ENCODE measurements at regions of chr2 and their contacts with region 1.

Region 1: DNA sequence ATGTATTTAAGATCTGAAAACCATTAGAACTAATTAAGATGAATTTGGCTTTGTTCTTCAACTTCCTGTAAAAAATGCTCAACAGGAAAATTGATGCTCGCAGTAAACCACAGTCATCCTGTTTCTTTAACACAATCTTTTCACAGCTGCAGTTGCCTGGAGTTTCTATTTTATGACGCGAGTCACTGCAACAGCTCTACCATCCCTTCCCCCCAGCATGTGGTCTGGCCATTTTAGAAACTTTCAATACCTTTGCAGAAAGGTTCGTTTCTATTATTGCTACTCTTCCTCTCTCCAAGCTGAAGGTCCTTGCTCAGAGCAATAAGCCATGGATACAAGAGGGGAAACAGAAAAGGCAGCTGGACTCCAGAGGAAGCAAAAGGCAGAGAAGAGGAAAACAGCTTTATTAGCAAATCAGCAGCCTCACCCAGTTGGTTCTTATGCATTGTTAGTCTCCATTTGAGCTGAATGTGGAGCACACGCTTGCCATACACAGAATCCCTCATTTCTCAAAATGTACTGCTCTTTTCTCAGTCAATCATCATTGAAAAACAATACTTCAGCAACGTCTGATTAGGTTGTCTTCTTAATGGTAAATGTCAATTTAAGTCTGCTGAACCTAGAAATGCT is 3.9 kb downstream of the WIPF1 start:
- DNase-seq: peak; percentile 86 to 90 (median 88)
- H3K4me3 ChIP-seq: peak overlapping the region; percentile 54 to 80
- H3K4me3 Mint-ChIP-seq: peak overlapping the region; percentile 88 to 100 (median 98)
- H3K27ac ChIP-seq: peak overlapping the region; percentile 89
- H3K27ac Mint-ChIP-seq: peak overlapping the region; percentile 92 to 100 (median 98)
- H3K4me1 ChIP-seq: peaks cover 63% of the 10 kb centered on the region
- H3K4me1 Mint-ChIP-seq: peaks cover 40 to 79% (median 53%) of the 10 kb centered on the region in 4 donors
- H3K27me3 ChIP-seq: no peaks in the 10 kb centered on the region
- H3K27me3 Mint-ChIP-seq: peaks cover 0 to 1% of the 10 kb centered on the region in 2 donors

Region 2: GRCh38 chr2:174487108-174487819 is 106.4 kb before region 1 on chr2:
- CTCF ChIA-PET with region 1: interaction called, 6 read pairs
- POLR2A ChIA-PET with region 1: interaction called, 63 read pairs
- intact Hi-C with region 1: loop called (anchors 1 kb)
- DNase-seq: peak; percentile 77 to 94 (median 82)
- H3K4me3 ChIP-seq: peak overlapping the region; percentile 4 to 77
- H3K4me3 Mint-ChIP-seq: peak overlapping the region; percentile 91 to 100 (median 98)
- H3K27ac ChIP-seq: peak overlapping the region; percentile 81
- H3K27ac Mint-ChIP-seq: peak overlapping the region; percentile 91 to 97 (median 94)
- H3K4me1 ChIP-seq: peaks cover 76% of the 10 kb centered on the region
- H3K4me1 Mint-ChIP-seq: peaks cover 48 to 87% (median 64%) of the 10 kb centered on the region in 4 donors
- H3K27me3 ChIP-seq: no peaks in the 10 kb centered on the region
- H3K27me3 Mint-ChIP-seq: no peaks in the 10 kb centered on the region

Region 3: GRCh38 chr2:174553811-174554493 is 39.7 kb before region 1 on chr2:
- CTCF ChIA-PET with region 1: interaction called, 3 read pairs
- POLR2A ChIA-PET with region 1: interaction called, 10 read pairs
- intact Hi-C with region 1: no loop called
- DNase-seq: peak; percentile 33 to 58 (median 49)
- H3K4me3 ChIP-seq: no peak overlapping the region
- H3K4me3 Mint-ChIP-seq: peak overlapping the region; percentile 57 to 85 (median 74)
- H3K27ac ChIP-seq: peak overlapping the region; percentile 67
- H3K27ac Mint-ChIP-seq: peak overlapping the region; percentile 83 to 97 (median 89)
- H3K4me1 ChIP-seq: peaks cover 39% of the 10 kb centered on the region
- H3K4me1 Mint-ChIP-seq: peaks cover 31 to 52% (median 37%) of the 10 kb centered on the region in 4 donors
- H3K27me3 ChIP-seq: no peaks in the 10 kb centered on the region
- H3K27me3 Mint-ChIP-seq: no peaks in the 10 kb centered on the region

Region 4: GRCh38 chr2:174577967-174578589 is 15.6 kb before region 1 on chr2:
- CTCF ChIA-PET with region 1: interaction called, 430 read pairs
- POLR2A ChIA-PET with region 1: interaction called, 256 read pairs
- intact Hi-C with region 1: loop called (anchors 1 kb)
- DNase-seq: peak; percentile 63 to 77 (median 67)
- H3K4me3 ChIP-seq: no peak overlapping the region
- H3K4me3 Mint-ChIP-seq: peak overlapping the region in 1 of 8 donors; percentile 3
- H3K27ac ChIP-seq: no peak overlapping the region
- H3K27ac Mint-ChIP-seq: peak overlapping the region; percentile 66 to 88 (median 80)
- H3K4me1 ChIP-seq: peaks cover 93% of the 10 kb centered on the region
- H3K4me1 Mint-ChIP-seq: peaks cover 49 to 93% (median 68%) of the 10 kb centered on the region in 4 donors
- H3K27me3 ChIP-seq: no peaks in the 10 kb centered on the region
- H3K27me3 Mint-ChIP-seq: no peaks in the 10 kb centered on the region

Region 5: GRCh38 chr2:174623690-174624089 is 30.0 kb after region 1 on chr2:
- CTCF ChIA-PET with region 1: interaction called, 3 read pairs
- POLR2A ChIA-PET with region 1: interaction called, 233 read pairs
- intact Hi-C with region 1: no loop called
- DNase-seq: no peak
- H3K4me3 ChIP-seq: no peak overlapping the region
- H3K4me3 Mint-ChIP-seq: peak overlapping the region in 1 of 8 donors; percentile 44
- H3K27ac ChIP-seq: peak overlapping the region; percentile 28
- H3K27ac Mint-ChIP-seq: peak overlapping the region in 6 of 7 donors; percentile 52 to 85 (median 79)
- H3K4me1 ChIP-seq: peaks cover 68% of the 10 kb centered on the region
- H3K4me1 Mint-ChIP-seq: peaks cover 51 to 80% (median 67%) of the 10 kb centered on the region in 4 donors
- H3K27me3 ChIP-seq: no peaks in the 10 kb centered on the region
- H3K27me3 Mint-ChIP-seq: no peaks in the 10 kb centered on the region

Region 6: GRCh38 chr2:174682578-174683391 is 89.1 kb after region 1 on chr2:
- CTCF ChIA-PET with region 1: interaction called, 222 read pairs
- POLR2A ChIA-PET with region 1: interaction called, 85 read pairs
- intact Hi-C with region 1: loop called (anchors 2 kb)
- DNase-seq: peak; percentile 66 to 79 (median 73)
- H3K4me3 ChIP-seq: peak overlapping the region; percentile 49 to 69
- H3K4me3 Mint-ChIP-seq: peak overlapping the region; percentile 89 to 97 (median 93)
- H3K27ac ChIP-seq: peak overlapping the region; percentile 84
- H3K27ac Mint-ChIP-seq: peak overlapping the region; percentile 86 to 96 (median 94)
- H3K4me1 ChIP-seq: peaks cover 48% of the 10 kb centered on the region
- H3K4me1 Mint-ChIP-seq: peaks cover 36 to 60% (median 48%) of the 10 kb centered on the region in 4 donors
- H3K27me3 ChIP-seq: no peaks in the 10 kb centered on the region
- H3K27me3 Mint-ChIP-seq: no peaks in the 10 kb centered on the region